Transverse colon (tissue), 4 donors: ENCODE measurements at regions of chr11 and their contacts with region 1.

Region 1: DNA sequence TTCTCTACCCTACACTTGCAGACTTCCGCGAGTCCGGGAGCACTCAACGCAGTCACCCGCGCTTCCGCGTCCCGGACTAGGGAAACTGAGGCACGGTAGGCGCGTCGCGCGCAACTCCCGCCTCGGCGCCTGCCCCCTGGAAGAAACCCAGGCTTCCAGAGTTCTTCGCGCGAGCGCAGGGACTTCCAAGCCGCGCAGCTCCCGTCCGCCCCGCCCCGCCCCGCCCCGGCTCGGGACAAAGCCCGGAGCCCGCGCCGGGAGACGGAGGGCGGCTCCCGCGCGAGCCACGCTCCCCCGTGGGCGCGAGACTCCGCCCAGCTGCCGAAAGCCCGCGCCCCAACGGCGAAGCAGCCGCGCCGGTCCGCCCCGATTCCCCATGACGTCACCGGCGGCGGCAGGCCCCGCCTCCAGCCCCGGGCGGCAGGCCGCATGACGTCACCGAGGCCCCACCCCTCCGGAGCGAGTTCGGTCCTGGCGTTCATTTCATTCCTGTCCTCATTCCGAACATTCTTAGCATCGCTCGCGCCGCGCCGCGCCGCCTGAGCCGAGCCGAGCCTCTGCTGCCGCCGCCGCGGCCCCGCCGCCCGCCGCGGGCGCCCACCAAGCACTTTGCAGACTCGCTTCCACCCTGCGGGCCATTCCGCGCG is at the start of gene TEAD1:
- DNase-seq: peak; percentile 97
- H3K4me3 ChIP-seq: peak within 1 kb of the TSS; percentile 63 to 97 (median 77)
- H3K27ac ChIP-seq: peak within 1 kb of the TSS; percentile 96 to 100 (median 98)
- H3K4me1 ChIP-seq: peaks cover 1 to 35% (median 28%) of the 10 kb centered on the region in 4 donors
- H3K27me3 ChIP-seq: no peaks in the 10 kb centered on the region
- CTCF ChIP-seq: no peak
- EP300 ChIP-seq: peak; percentile 58
- POLR2A ChIP-seq: peak; percentile 68
- total RNA-seq, gene TEAD1: 46.4 to 214 (median 61.2) TPM

Region 2: DNA sequence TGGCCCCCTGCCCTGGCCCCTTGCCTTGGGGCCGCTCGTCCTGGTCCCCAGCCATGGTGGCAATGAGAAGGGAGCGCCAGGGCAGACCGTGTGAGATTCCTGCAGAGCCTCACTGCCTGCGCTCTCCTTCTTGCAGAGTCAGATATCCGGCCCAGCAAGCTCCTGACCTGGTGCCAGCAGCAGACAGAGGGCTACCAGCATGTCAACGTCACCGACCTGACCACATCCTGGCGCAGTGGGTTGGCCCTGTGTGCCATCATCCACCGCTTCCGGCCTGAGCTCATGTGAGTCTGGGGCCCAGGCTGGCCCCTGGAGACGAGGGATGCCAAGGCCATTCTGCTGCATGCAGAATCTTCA is 449.5 kb before region 1 on chr11:
- in situ Hi-C with region 1: no loop called
- intact Hi-C with region 1: no loop called
- DNase-seq: peak; percentile 76
- H3K4me3 ChIP-seq: no peak overlapping the region
- H3K27ac ChIP-seq: peak overlapping the region; percentile 70 to 78 (median 75)
- H3K4me1 ChIP-seq: peaks cover 38 to 58% (median 45%) of the 10 kb centered on the region in 4 donors
- H3K27me3 ChIP-seq: no peaks in the 10 kb centered on the region
- CTCF ChIP-seq: no peak
- EP300 ChIP-seq: no peak
- POLR2A ChIP-seq: no peak

Region 3: GRCh38 chr11:12331239-12331874 is 342.7 kb before region 1 on chr11:
- in situ Hi-C with region 1: no loop called
- intact Hi-C with region 1: loop called (anchors 2 kb)
- DNase-seq: peak; percentile 85
- H3K4me3 ChIP-seq: no peak overlapping the region
- H3K27ac ChIP-seq: peak overlapping the region; percentile 42 to 76 (median 67)
- H3K4me1 ChIP-seq: peaks cover 2 to 12% (median 4%) of the 10 kb centered on the region in 4 donors
- H3K27me3 ChIP-seq: no peaks in the 10 kb centered on the region
- CTCF ChIP-seq: peak; percentile 66 to 90 (median 74)
- EP300 ChIP-seq: no peak
- POLR2A ChIP-seq: no peak

Region 4: DNA sequence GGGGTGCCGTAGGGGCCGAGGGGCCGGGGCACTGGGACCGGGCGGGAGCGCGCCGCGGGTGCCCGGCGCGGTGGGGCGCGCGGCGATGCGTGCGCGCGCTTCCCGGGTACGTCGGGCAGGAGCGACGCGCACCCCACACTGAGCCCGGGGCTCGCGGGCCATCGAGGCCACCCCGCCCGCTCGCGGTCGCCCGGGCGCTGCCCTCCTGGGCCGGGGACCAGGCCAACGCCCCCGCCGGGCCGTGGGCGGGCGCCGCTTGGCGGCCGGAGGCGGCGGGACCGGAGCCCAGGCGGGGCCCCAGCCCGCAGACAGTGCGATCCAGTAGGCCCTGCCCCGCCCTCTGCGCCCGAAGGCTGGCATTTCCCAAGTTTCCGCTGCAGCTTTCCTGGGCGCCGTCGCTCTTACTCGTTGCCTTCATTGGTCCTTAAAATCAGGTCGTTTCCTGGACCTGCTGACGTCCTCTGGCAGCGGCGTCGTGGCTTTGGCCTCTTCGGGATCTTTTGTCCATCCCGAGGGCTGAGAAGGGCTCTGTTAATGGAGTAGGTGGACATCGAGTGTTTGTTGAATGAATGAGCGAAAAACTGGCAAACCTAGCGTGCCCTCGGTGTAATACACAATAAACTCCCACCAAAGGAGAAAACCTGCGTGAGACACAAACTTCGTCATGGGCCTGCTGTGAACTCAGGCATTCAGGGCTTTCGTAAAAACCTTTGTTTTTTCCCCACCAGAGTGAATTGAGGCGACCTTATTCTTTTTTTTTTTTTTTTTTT is 296.0 kb before region 1 on chr11:
- in situ Hi-C with region 1: no loop called
- intact Hi-C with region 1: loop called (anchors 5 kb)
- DNase-seq: peak; percentile 86
- H3K4me3 ChIP-seq: peak overlapping the region; percentile 56 to 84 (median 72)
- H3K27ac ChIP-seq: peak overlapping the region; percentile 97 to 99 (median 98)
- H3K4me1 ChIP-seq: peaks cover 3 to 44% (median 11%) of the 10 kb centered on the region in 4 donors
- H3K27me3 ChIP-seq: no peaks in the 10 kb centered on the region
- CTCF ChIP-seq: peak in 3 of 5 experiments; percentile 25 to 55 (median 44)
- EP300 ChIP-seq: peak; percentile 49
- POLR2A ChIP-seq: peak; percentile 17

Region 5: GRCh38 chr11:12397931-12398334 is 276.1 kb before region 1 on chr11:
- in situ Hi-C with region 1: no loop called
- intact Hi-C with region 1: loop called (anchors 5 kb)
- DNase-seq: peak; percentile 50
- H3K4me3 ChIP-seq: no peak overlapping the region
- H3K27ac ChIP-seq: peak overlapping the region; percentile 71 to 99 (median 84)
- H3K4me1 ChIP-seq: peaks cover 2 to 17% (median 6%) of the 10 kb centered on the region in 4 donors
- H3K27me3 ChIP-seq: no peaks in the 10 kb centered on the region
- CTCF ChIP-seq: no peak
- EP300 ChIP-seq: peak; percentile 65
- POLR2A ChIP-seq: no peak

Region 6: DNA sequence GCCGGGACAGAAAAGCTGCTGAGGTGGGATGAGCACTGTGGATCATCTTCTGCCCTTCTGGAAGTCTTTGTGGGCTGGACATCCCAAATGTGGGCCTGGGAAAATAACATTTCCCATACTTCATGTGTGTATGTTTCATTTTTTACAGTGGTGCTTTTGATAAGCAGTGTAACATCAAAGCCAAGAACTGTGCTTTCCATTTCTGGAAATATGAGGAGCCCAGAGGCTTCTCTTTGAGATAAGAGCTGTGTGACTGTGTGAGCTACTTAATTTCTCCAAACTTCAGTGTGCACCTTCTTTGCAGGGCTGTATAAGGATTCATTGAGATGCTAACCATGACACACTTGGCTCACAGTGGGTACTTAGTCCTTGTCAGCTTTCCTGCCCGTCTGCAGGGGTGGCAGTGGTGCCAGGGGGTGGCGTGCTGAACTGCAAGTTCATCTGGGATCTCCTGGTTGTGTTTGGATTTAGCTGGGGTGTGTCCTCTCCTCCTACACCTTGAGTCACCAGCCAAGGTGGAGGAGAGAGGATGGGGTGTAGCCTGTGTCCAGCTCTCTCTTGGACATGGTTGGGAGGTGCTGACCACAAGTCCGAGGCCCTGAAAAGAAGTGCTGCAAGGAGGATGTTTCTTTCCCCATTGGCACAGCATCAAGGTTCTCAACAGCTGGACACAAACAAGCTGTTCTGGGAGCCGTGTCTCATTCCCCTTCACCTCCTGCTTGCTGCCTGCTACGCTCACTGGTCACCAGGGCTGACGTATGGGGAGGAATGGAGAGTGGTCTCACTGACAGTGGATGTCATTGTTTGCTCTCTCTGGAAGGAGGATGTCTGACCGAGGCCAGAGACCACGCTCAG is 139.6 kb after region 1 on chr11:
- in situ Hi-C with region 1: no loop called
- intact Hi-C with region 1: loop called (anchors 10 kb)
- DNase-seq: peak; percentile 38
- H3K4me3 ChIP-seq: no peak overlapping the region
- H3K27ac ChIP-seq: peak overlapping the region; percentile 39 to 83 (median 76)
- H3K4me1 ChIP-seq: peaks cover 9 to 41% (median 25%) of the 10 kb centered on the region in 4 donors
- H3K27me3 ChIP-seq: no peaks in the 10 kb centered on the region
- CTCF ChIP-seq: no peak
- EP300 ChIP-seq: no peak
- POLR2A ChIP-seq: no peak

Region 7: GRCh38 chr11:12893787-12894672 is 220.0 kb after region 1 on chr11:
- in situ Hi-C with region 1: loop called (anchors 10 to 25 kb)
- intact Hi-C with region 1: loop called (anchors 5 kb)
- DNase-seq: peak; percentile 74
- H3K4me3 ChIP-seq: no peak overlapping the region
- H3K27ac ChIP-seq: peak overlapping the region; percentile 17 to 74 (median 52)
- H3K4me1 ChIP-seq: peaks cover 3 to 31% (median 15%) of the 10 kb centered on the region in 4 donors
- H3K27me3 ChIP-seq: no peaks in the 10 kb centered on the region
- CTCF ChIP-seq: peak; percentile 86 to 94 (median 91)
- EP300 ChIP-seq: no peak
- POLR2A ChIP-seq: no peak

Region 8: GRCh38 chr11:12963792-12964536 is 289.9 kb after region 1 on chr11:
- in situ Hi-C with region 1: no loop called
- intact Hi-C with region 1: no loop called
- DNase-seq: peak; percentile 72
- H3K4me3 ChIP-seq: no peak overlapping the region
- H3K27ac ChIP-seq: no peak overlapping the region
- H3K4me1 ChIP-seq: no peaks in the 10 kb centered on the region
- H3K27me3 ChIP-seq: no peaks in the 10 kb centered on the region
- CTCF ChIP-seq: peak; percentile 83 to 89 (median 86)
- EP300 ChIP-seq: no peak
- POLR2A ChIP-seq: no peak